Vagina (tissue), 2 donors: ENCODE measurements at regions of chr2 and their contacts with region 1.

Region 1: DNA sequence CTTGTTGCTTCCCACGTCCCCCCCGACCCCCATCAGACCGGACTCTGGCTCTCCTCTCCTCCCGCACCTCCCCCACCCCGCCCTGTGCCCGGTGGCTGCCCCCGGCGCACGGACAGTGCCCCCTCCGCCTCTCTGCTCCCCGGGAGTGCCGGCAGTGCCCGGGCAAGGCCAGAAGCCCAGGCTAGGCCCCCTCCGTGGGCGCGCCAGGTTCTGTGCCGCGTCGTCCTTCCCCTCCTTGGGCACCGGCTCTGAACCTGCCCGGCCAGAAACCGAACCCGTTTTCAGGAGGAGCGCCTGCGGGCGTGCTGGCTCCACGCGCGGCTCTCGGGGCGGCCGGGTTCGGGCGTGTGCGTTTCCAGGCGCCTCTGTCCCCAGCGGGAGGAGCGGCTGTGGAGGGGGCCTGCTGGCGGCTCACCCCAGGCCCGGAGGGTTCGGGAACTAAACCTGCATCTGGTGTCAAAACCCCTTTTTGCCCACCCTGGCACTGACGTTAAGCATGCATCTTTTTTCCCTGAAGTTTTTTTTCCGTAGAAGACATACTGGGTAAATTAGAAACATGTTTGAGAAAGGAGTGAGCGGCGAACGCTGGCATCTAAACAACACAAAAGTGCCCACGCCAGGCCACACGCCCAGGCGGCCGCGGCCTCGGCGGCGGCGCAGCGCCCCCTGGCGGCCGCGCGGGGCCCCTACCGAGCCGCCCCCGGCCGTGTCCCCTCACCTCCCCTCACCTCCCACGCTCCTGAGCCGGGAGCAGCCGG is 123.9 kb upstream of the SLC1A4 start:
- DNase-seq: no peak
- H3K4me3 ChIP-seq: peak overlapping the region; percentile 72 to 79
- H3K27ac ChIP-seq: peak overlapping the region; percentile 95
- H3K4me1 ChIP-seq: peaks cover 28% of the 10 kb centered on the region
- H3K27me3 ChIP-seq: no peaks in the 10 kb centered on the region
- CTCF ChIP-seq: peak in 1 of 3 experiments; percentile 71
- POLR2A ChIP-seq: no peak

Region 2: DNA sequence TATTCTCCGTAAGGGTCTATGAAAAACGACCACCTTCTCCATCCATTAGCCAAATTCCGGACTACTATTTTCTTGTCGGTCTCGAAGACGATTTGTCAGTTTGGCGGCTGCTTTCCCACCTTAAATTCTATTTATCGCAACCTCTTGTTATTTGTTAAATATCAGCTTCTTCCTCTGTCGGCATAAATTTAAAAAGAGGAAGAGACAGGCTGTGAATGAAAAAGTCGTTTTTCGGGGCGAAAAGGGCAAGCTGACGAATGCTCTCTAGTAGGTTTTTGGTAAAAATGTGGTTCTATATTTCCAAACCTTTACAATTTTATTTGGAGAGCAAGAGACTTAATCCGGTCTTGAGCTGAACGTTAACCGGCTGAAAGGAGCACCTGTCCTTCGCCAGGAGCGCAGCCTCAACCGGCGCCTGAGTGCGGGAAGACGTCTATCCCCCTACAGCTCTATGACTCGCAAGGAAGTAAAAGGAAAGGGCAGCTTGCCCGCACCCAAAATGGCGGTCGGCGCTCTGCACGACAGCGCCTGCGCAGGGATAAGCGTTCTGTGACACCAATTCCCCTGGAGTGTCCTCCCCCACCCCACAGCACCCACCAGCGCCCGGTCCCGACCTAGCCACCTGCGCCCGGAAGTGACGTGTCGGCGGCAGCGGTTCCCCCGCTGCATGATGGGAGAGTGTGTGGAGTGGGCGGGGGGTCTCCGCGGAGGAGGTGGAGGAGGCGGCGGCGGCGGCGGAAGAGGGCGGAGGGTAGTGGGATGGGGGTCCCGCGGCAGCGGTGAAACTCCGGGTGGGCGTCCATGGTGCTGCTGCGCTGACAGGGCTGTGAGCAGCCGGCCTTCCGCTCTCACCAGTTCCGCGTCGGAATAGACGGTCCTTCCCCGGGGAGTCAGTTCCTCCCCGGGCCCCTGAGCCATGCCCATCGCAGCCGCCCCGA is 341.3 kb before region 1 on chr2 and contains the start of gene AFTPH:
- intact Hi-C with region 1: loop called (anchors 10 kb)
- DNase-seq: peak; percentile 99
- H3K4me3 ChIP-seq: peak within 1 kb of the TSS; percentile 63 to 87
- H3K27ac ChIP-seq: peak within 1 kb of the TSS; percentile 91
- H3K4me1 ChIP-seq: peaks cover 19% of the 10 kb centered on the region
- H3K27me3 ChIP-seq: no peaks in the 10 kb centered on the region
- CTCF ChIP-seq: no peak
- POLR2A ChIP-seq: peak in 1 of 2 donors; percentile 75
- total RNA-seq, gene AFTPH: 33.4 TPM

Region 3: GRCh38 chr2:64595397-64596160 is 269.7 kb before region 1 on chr2:
- intact Hi-C with region 1: loop called (anchors 5 kb)
- DNase-seq: no peak
- H3K4me3 ChIP-seq: no peak overlapping the region
- H3K27ac ChIP-seq: no peak overlapping the region
- H3K4me1 ChIP-seq: peaks cover 34% of the 10 kb centered on the region
- H3K27me3 ChIP-seq: no peaks in the 10 kb centered on the region
- CTCF ChIP-seq: no peak
- POLR2A ChIP-seq: no peak

Region 4: DNA sequence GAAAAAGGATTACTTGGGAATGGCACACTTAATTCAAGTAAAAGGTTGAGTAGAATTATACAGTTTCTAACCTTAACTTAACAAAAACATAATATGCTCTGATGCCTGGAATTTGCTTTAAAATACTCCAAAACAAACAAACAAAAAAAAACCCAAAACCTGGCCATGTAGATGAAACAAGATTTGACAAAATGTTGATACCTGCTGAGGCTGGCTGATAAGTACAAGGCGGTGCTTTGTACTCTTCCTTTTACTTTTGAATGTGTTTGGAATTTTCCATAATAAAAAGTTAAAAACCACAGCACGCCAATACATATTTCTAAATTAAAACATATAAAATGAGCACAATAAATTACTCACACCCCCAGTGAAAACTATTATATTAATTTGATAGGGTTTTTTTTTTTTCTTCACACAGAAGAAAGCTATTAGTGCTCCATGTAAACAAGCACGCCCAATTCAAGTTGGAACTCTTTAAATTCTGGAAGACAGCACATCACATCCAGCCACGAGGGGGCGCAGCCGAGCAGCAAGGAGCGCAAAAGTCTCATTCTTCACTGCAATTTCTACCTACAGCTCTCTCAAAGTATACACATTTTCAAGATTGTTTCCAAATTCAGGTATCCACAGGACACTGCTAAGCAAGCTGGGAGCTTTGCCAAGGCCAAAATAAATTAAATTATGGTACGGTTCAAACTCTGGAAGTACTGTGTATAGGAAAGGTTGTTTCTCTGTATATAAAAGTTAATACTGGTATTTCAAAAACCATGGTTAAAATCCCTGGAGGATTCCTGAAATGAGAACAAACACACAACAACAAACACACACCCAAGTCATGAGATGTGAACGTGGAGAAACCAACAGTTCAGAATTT is 219.0 kb before region 1 on chr2:
- intact Hi-C with region 1: loop called (anchors 2 kb)
- DNase-seq: no peak
- H3K4me3 ChIP-seq: peak overlapping the region in 1 of 2 donors; percentile 7
- H3K27ac ChIP-seq: peak overlapping the region; percentile 87
- H3K4me1 ChIP-seq: peaks cover 89% of the 10 kb centered on the region
- H3K27me3 ChIP-seq: no peaks in the 10 kb centered on the region
- CTCF ChIP-seq: peak; percentile 62 to 85 (median 80)
- POLR2A ChIP-seq: no peak